Activated CD4-positive, alpha-beta memory T cell treated with anti-CD3 and anti-CD28 coated beads, Interleukin-2, amount 10 ng/mL, durations not matched to agents 7 days and 5 days (primary cell): ENCODE measurements at regions of chr10 and their contacts with region 1.

Region 1: GRCh38 chr10:69123747-69124562 is at the start of gene VPS26A:
- DNase-seq: peak; percentile 99
- H3K4me3 Mint-ChIP-seq: peak within 1 kb of the TSS; percentile 92
- H3K27ac Mint-ChIP-seq: peak within 1 kb of the TSS; percentile 88
- H3K4me1 Mint-ChIP-seq: peaks cover 37% of the 10 kb centered on the region
- H3K27me3 Mint-ChIP-seq: peaks cover 3% of the 10 kb centered on the region
- total RNA-seq, gene VPS26A: 57.1 to 63.4 TPM

Region 2: DNA sequence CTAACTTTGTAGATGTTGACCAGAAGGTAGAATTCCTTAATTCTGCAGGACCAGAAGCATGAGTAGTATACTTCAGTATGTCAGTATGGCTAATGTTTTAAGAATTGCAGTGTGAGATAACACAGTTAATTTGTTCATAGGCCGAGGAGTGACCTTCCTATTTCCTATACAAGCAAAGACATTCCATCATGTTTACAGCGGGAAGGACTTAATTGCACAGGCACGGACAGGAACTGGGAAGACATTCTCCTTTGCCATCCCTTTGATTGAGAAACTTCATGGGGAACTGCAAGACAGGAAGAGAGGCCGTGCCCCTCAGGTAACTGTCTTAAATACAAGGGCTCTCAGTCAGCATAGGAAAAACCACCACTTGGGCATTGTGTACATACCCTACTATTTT is 160.8 kb before region 1 on chr10:
- CTCF ChIA-PET with region 1: interaction called, 3 read pairs
- POLR2A ChIA-PET with region 1: interaction called, 10 read pairs
- DNase-seq: no peak
- H3K4me3 Mint-ChIP-seq: no peak overlapping the region
- H3K27ac Mint-ChIP-seq: no peak overlapping the region
- H3K4me1 Mint-ChIP-seq: peaks cover 41% of the 10 kb centered on the region
- H3K27me3 Mint-ChIP-seq: no peaks in the 10 kb centered on the region

Region 3: DNA sequence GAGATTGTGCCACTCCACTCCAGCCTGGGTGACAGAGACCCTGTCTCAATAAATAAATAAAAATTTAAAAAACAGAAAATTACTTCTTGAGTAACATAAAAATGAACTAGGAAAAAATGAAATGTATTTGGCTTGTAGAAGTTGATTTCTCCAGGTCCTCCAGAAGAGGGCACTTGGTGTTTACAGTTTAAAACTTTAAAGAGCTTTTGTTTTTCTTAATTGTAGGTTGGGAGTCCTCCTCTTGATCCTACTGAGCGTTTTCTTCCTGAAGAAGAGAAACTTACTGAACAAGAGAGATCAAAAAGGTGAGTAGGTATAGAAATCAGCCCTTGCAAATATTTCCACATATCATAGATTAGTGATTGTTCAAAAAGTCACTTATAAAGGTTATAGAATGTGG is 119.1 kb before region 1 on chr10:
- CTCF ChIA-PET with region 1: interaction called, 14 read pairs
- POLR2A ChIA-PET with region 1: no interaction called
- DNase-seq: no peak
- H3K4me3 Mint-ChIP-seq: no peak overlapping the region
- H3K27ac Mint-ChIP-seq: no peak overlapping the region
- H3K4me1 Mint-ChIP-seq: peaks cover 12% of the 10 kb centered on the region
- H3K27me3 Mint-ChIP-seq: no peaks in the 10 kb centered on the region

Region 4: DNA sequence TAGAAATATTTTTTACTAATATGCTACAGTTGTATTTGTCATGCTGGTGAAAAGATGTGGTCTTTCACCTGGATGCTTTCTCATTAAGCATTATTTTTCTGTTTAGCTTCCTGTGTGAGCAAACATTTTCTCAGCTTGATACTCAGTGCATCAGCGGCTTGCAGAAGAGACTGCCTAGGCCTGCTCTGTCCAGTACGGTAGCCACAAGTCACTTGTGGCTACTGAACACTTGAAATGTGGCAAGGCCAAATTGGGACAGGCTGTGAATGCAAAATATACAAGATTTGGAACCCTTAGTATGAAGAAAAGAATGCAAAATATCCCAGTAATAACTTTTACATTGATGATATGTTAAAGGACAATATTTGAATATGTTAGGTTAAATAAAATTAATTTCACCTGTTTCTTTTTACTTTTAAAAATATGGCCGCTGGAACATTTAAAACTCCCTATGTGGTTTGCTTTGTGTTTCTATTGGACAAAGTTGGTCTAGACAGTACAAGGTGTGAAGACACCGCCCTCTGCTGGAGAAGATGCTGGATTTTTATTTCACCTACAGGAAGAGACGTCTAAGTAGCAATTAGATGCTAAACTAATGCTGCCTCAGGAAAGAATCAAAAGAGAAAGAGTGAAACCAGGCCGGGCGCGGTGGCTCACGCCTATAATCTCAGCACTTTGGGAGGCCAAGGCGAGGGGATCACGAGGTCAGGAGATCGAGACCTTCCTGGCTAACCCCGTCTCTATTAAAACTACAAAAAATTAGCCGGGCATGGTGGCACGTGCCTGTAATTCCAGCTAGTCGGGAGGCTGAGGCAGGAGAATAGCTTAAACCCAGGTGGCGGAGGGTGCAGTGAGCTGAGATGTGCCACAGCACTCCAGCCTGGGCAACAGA is 30.8 kb before region 1 on chr10:
- CTCF ChIA-PET with region 1: interaction called, 8 read pairs
- POLR2A ChIA-PET with region 1: interaction called, 12 read pairs
- DNase-seq: peak; percentile 88
- H3K4me3 Mint-ChIP-seq: peak overlapping the region; percentile 53
- H3K27ac Mint-ChIP-seq: peak overlapping the region; percentile 72
- H3K4me1 Mint-ChIP-seq: peaks cover 63% of the 10 kb centered on the region
- H3K27me3 Mint-ChIP-seq: no peaks in the 10 kb centered on the region

Region 5: GRCh38 chr10:69101451-69102095 is 22.4 kb before region 1 on chr10:
- CTCF ChIA-PET with region 1: interaction called, 5 read pairs
- POLR2A ChIA-PET with region 1: interaction called, 12 read pairs
- DNase-seq: peak; percentile 65
- H3K4me3 Mint-ChIP-seq: peak overlapping the region; percentile 5
- H3K27ac Mint-ChIP-seq: peak overlapping the region; percentile 75
- H3K4me1 Mint-ChIP-seq: peaks cover 38% of the 10 kb centered on the region
- H3K27me3 Mint-ChIP-seq: no peaks in the 10 kb centered on the region

Region 6: GRCh38 chr10:69392481-69393000 is 268.6 kb after region 1 on chr10:
- CTCF ChIA-PET with region 1: interaction called, 12 read pairs
- POLR2A ChIA-PET with region 1: no interaction called
- DNase-seq: peak; percentile 88
- H3K4me3 Mint-ChIP-seq: no peak overlapping the region
- H3K27ac Mint-ChIP-seq: peak overlapping the region; percentile 67
- H3K4me1 Mint-ChIP-seq: peaks cover 32% of the 10 kb centered on the region
- H3K27me3 Mint-ChIP-seq: no peaks in the 10 kb centered on the region